Adrenal gland (tissue), 19 donors: ENCODE measurements at regions of chrX and their contacts with region 1.

Region 1: DNA sequence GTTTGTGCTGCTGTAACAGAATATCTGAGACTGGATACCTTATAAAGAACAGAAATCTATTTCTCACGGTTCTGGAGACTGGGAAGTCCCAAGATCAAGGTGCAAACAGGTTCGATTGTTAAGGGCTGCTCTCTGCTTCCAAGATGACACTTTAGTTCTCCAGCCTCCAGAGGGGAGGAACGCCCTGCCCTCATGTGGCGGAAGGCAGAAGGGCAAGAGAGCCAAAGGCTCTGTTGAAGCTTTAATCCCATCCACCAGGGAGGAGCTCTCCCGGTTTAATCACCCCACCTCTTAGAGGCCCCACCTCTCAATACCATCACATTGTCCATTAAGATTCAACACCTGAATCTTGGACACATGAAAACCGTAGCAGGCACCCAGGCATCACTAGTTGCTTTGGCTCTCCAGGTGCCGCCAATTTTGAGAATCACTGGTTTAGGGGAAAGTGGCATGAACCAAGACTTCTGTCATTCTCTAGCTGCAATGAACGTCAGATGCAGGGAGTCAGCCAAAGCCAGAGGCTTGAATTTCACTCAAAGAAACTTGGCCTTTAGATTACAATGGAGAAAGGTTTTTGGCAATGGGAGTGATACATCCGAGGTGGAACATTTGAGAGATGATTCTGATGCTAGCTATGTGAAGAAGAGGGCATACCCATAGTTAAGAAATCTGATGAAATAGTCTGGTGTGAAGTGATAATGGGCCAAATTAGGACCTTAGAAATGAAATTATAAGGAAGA is 15.7 kb downstream of the FHL1 start:
- DNase-seq: peak in 6 of 7 donors; percentile 32 to 66 (median 56)
- H3K4me3 ChIP-seq: no peak overlapping the region
- H3K27ac ChIP-seq: peak overlapping the region in 1 of 5 donors; percentile 27
- H3K4me1 ChIP-seq: no peaks in the 10 kb centered on the region
- H3K27me3 ChIP-seq: peaks cover 6% of the 10 kb centered on the region
- CTCF ChIP-seq: peak; percentile 49 to 69 (median 60)
- POLR2A ChIP-seq: no peak

Region 2: DNA sequence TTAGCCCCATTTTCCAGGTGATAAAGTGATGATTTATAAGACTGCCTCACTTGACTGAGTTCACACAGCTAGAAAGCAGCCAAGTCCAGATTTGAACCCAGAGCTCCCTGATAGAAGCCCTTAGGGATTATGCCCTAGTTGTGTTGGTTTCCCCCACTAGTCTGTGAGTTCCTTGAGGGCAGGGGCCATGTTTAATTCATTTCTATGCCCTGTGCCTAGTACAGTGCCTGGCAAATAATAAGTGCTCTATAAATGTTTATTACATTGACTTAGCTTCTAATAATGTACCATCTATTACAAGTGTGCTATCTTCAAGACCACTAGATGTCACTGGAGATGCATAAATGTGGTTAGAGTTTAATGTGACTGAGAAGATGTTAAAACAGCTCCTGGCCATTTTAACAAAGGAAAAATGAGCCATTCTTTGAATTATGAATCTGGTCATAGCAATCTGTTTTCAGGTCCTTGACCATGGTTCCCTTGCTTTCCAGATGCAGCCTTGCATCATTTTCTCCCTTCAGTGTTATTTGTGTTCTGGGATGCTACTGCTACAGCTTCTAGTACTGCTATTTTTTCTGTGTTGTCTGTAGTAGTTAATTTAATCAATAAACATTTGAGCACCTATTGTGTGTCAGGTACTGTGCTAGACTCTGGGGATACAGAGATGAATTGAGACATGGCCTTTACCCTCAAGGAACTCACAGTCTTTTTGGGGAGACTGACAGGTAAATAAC is 134.6 kb before region 1 on chrX:
- intact Hi-C with region 1: loop called (anchors 5 to 10 kb)
- DNase-seq: no peak
- H3K4me3 ChIP-seq: no peak overlapping the region
- H3K27ac ChIP-seq: no peak overlapping the region
- H3K4me1 ChIP-seq: no peaks in the 10 kb centered on the region
- H3K27me3 ChIP-seq: no peaks in the 10 kb centered on the region
- CTCF ChIP-seq: peak; percentile 49 to 74 (median 66)
- POLR2A ChIP-seq: no peak

Region 3: GRCh38 chrX:136488706-136489105 is 325.7 kb after region 1 on chrX:
- intact Hi-C with region 1: no loop called
- DNase-seq: no peak
- H3K4me3 ChIP-seq: no peak overlapping the region
- H3K27ac ChIP-seq: no peak overlapping the region
- H3K4me1 ChIP-seq: no peaks in the 10 kb centered on the region
- H3K27me3 ChIP-seq: peaks cover 36% of the 10 kb centered on the region
- CTCF ChIP-seq: no peak
- POLR2A ChIP-seq: no peak